ENCODE measurements at regions of chr1 and their contacts with region 1.

Region 1: DNA sequence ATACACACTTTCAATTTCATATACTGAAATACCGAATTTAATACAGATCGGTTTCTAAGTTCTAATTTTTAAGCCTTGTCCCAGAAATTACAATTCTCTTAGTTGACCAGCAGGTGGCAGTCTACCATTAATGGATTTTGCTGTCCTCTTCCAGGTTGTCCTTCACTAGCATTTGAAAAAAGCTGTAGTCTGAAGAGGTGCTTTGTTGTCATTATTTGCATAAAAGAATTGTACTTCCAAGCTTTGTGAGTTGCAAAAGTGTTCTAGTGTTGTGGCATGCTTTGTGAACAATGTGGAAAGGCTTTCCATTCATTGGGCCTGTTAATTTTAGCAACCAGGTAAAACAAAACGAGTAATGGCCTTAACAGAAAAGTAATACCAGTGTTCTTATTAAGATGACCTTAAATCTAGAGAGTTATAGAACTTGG is 193.6 kb downstream of the RPS6KC1 start:
- DNase-seq: peak; percentile 75
- ATAC-seq: peak; percentile 70
- H3K4me3 ChIP-seq: no peak overlapping the region
- H3K27ac ChIP-seq: no peak overlapping the region
- H3K4me1 ChIP-seq: no peaks in the 10 kb centered on the region
- H3K27me3 ChIP-seq: no peaks in the 10 kb centered on the region
- CTCF ChIP-seq: peak; percentile 99

Region 2: DNA sequence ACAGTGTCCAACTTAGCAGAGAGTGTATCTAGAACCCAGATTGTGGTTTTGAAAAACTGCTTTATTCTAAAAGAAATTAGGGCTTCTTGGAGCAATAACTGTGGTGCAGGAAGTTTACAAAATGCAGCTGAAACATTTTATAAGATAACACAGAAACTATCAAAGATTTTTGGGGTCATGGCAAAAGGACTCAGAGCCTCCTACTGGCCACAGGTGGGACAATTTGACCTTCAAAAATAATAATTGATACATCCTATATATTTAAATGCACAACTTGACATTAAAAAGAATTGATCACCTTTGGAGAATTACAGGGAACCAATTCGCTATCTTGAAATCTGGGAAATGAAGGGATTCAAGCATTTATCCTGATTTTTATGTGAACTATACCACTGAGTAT is 41.6 kb after region 1 on chr1:
- CTCF ChIA-PET with region 1: no interaction called
- POLR2A ChIA-PET with region 1: no interaction called
- intact Hi-C with region 1: loop called (anchors 2 kb)
- DNase-seq: peak; percentile 23
- ATAC-seq: no peak
- H3K4me3 ChIP-seq: no peak overlapping the region
- H3K27ac ChIP-seq: no peak overlapping the region
- H3K4me1 ChIP-seq: peaks cover 13% of the 10 kb centered on the region; the same call in 1 of the 2 replicates
- H3K27me3 ChIP-seq: no peaks in the 10 kb centered on the region
- CTCF ChIP-seq: peak; percentile 73

Region 3: DNA sequence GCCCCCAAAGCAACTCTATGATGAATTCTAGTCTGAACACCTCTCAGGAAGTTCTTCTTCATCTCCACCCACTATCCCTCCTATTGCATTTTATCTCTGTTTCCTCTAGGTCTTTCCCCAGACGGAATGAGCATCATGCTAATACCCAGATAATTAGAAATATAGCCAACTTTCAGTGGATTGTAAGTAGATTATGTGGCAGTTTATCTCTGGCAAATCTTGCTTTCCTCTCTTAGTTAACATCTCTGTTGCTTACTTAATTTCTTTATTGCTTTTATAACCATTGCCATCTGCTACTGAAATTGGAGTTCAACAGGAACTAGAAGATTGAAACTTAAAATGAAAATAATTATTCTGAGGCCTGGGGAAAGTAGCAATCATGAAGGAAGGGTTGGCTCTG is 185.0 kb after region 1 on chr1:
- CTCF ChIA-PET with region 1: no interaction called
- POLR2A ChIA-PET with region 1: no interaction called
- intact Hi-C with region 1: loop called (anchors 5 kb)
- DNase-seq: no peak
- ATAC-seq: no peak
- H3K4me3 ChIP-seq: no peak overlapping the region
- H3K27ac ChIP-seq: no peak overlapping the region
- H3K4me1 ChIP-seq: no peaks in the 10 kb centered on the region
- H3K27me3 ChIP-seq: peaks cover 77% of the 10 kb centered on the region
- CTCF ChIP-seq: no peak

Region 4: DNA sequence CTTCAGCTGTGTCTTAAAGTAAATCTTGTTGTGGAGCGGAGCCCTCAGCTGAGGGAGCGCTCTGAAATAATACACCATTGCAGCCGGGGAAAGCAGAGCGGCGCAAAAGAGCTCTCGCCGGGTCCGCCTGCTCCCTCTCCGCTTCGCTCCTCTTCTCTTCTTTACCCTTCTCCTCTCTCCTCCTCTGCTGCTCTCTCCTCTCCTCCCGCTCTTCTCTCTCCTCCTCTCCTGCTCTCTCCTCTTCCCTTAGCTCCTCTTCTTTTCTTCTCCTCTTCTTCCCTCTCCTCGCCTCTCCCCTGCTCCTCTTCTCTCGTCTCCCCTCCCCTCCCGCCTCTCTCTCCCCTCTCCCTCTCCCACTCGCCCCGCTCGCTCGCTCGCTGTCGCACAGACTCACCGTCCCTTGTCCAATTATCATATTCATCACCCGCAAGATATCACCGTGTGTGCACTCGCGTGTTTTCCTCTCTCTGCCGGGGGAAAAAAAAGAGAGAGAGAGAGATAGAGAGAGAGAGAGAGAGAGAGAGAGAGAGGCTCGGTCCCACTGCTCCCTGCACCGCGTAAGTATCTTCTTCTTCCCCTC is 743.3 kb after region 1 on chr1 and contains the start of gene PROX1:
- CTCF ChIA-PET with region 1: no interaction called
- POLR2A ChIA-PET with region 1: no interaction called
- intact Hi-C with region 1: loop called (anchors 10 kb)
- DNase-seq: peak; percentile 82
- ATAC-seq: peak; percentile 89
- H3K4me3 ChIP-seq: peak within 1 kb of the TSS; percentile 70
- H3K27ac ChIP-seq: no peak within 1 kb of the TSS
- H3K4me1 ChIP-seq: no peaks in the 10 kb centered on the region
- H3K27me3 ChIP-seq: peaks cover 96% of the 10 kb centered on the region
- CTCF ChIP-seq: 0 out of 2 replicates have a peak, but pooled peaks have one; percentile 10
- total RNA-seq, gene PROX1: 0.12 TPM in 1 of 2 replicates, not detected in the other

Region 5: DNA sequence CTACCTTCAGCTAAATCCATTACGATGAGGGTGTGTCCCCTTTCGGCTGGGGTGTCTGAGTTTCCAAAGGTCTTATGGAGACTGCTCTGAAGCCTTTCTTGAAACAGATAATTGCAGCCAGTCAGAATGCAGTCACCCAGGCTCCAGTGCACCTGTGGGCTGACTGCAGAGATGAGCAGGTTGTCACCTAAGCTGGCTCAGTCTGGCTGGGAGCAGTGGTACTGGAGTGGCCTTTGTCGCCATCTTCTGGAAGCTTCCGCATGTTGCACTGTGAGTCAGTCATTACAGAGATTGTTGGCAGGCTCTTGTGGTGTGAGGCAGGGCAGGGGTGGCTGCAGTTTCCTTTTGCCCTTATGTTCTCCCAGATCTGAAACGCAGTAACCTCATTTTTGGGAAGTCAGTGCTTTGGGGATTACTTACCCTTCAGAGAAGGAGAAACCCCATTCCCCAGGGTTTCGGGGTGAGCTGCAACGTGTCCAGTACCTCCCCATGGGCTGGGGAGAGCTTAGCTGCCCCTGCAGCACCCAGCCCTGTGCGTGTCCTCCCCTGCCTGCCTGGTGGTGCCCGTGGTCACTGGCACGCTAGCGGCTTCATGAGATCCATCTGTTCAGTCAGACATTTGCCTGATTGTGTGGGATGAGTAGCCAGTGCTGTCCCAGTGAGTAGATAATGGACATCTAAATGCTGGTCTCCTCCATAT is 1084.2 kb after region 1 on chr1:
- CTCF ChIA-PET with region 1: no interaction called
- POLR2A ChIA-PET with region 1: no interaction called
- intact Hi-C with region 1: loop called (anchors 5 kb)
- DNase-seq: peak; percentile 96
- ATAC-seq: peak; percentile 93
- H3K4me3 ChIP-seq: no peak overlapping the region
- H3K27ac ChIP-seq: no peak overlapping the region
- H3K4me1 ChIP-seq: peaks cover 4% of the 10 kb centered on the region
- H3K27me3 ChIP-seq: no peaks in the 10 kb centered on the region
- CTCF ChIP-seq: peak; percentile 96

Region 6: GRCh38 chr1:215064327-215064726 is 1819.6 kb after region 1 on chr1:
- CTCF ChIA-PET with region 1: no interaction called
- POLR2A ChIA-PET with region 1: no interaction called
- intact Hi-C with region 1: no loop called
- DNase-seq: no peak
- ATAC-seq: no peak
- H3K4me3 ChIP-seq: no peak overlapping the region
- H3K27ac ChIP-seq: no peak overlapping the region
- H3K4me1 ChIP-seq: no peaks in the 10 kb centered on the region
- H3K27me3 ChIP-seq: no peaks in the 10 kb centered on the region
- CTCF ChIP-seq: no peak